Pancreas (tissue), 10 donors: ENCODE measurements at regions of chr5 and their contacts with region 1.

Region 1: DNA sequence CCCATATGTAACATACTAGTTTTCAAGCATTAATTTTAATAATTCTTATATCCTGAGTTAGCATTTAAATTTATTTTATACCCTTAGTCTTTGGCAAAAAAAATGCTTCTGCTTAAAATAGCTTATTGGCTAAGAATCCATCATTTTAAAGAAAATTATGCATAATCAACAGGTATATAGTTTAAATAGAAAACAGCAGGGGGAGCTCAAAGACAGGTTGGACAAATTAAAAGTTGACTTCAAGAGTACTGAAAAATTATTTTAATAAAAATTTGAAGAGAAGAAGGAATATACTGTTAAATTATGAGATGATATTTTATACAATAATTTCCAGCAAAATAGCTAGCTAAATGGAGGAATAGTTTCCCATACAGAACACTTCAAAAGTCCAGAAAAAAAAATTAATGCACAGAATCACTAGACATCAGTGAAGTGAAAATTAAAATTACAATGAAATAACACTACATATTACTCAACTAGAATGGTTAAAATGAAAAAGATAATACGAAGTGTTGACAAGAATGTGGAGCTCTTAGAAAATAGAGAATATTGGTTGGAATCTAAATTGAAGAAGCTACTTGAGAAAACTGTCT is 387.1 kb downstream of the PDE4D start:
- DNase-seq: no peak
- ATAC-seq: peak in 3 of 4 donors; percentile 40 to 68 (median 56)
- H3K4me3 ChIP-seq: no peak overlapping the region
- H3K27ac ChIP-seq: no peak overlapping the region
- H3K4me1 ChIP-seq: no peaks in the 10 kb centered on the region
- H3K27me3 ChIP-seq: no peaks in the 10 kb centered on the region
- CTCF ChIP-seq: peak; percentile 9 to 50 (median 38)

Region 2: DNA sequence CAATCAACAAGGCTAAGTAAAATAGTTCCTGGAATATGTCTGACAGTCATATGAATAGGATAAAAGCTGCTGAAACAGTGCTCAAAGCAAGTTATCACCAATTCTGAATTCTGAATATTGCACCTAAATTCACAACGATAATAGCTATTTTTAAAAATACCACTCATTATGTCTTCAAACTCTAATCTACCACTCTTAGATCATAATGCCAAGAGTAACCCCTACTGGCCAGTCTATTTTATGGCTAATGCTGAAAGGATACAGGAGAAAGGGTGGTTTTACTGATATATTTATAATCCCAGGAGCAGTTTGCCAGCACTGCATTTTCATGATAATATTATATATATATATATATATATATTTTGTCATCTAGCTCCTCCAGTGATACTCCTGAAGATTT is 154.4 kb after region 1 on chr5:
- intact Hi-C with region 1: loop called in 1 of 3 experiments (anchors 10 kb)
- DNase-seq: no peak
- ATAC-seq: peak in 2 of 4 donors; percentile 42 to 71
- H3K4me3 ChIP-seq: no peak overlapping the region
- H3K27ac ChIP-seq: no peak overlapping the region
- H3K4me1 ChIP-seq: peaks cover 0 to 6% (median 6%) of the 10 kb centered on the region in 3 donors
- H3K27me3 ChIP-seq: no peaks in the 10 kb centered on the region
- CTCF ChIP-seq: no peak

Region 3: DNA sequence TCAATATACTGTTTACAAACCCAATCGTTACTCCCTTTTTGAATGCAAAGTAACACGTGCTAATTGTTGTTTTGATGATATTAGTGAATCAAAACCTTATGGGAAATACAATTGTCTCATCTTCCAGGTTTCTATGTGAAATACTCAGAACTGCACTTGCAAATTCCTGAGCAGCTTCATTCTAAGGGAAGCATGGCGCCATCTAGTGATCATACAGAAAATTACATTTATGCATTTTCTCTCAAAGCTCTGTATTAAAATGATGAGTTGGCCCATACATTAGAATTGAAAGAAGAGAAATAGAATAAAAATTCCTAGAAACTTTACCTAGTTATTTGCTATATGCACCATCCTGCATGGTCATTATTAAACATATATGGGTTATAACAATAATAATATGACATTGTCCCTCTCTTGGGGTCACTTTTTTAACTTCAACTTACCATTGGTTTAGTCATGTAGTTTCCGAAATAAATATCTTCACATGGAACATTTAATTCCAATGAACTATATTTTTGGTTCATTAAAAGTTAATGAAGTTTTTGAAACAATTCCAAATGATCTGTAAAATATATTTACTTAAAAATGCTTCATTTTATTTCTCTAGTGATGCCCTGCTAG is 167.2 kb after region 1 on chr5:
- intact Hi-C with region 1: loop called in 2 of 3 experiments (anchors 5 to 10 kb)
- DNase-seq: no peak
- ATAC-seq: peak; percentile 48 to 75 (median 72)
- H3K4me3 ChIP-seq: no peak overlapping the region
- H3K27ac ChIP-seq: no peak overlapping the region
- H3K4me1 ChIP-seq: no peaks in the 10 kb centered on the region
- H3K27me3 ChIP-seq: no peaks in the 10 kb centered on the region
- CTCF ChIP-seq: peak; percentile 60 to 82 (median 65)